Activated CD4-positive, alpha-beta memory T cell treated with anti-CD3 and anti-CD28 coated beads for 36 hours (primary cell): ENCODE measurements at regions of chr10 and their contacts with region 1.

Region 1: GRCh38 chr10:35912615-35913569 is 270.8 kb upstream of the FZD8 start:
- DNase-seq: no peak
- H3K4me3 Mint-ChIP-seq: no peak overlapping the region
- H3K27ac Mint-ChIP-seq: no peak overlapping the region
- H3K4me1 Mint-ChIP-seq: no peaks in the 10 kb centered on the region
- H3K27me3 Mint-ChIP-seq: no peaks in the 10 kb centered on the region

Region 2: GRCh38 chr10:35642027-35642792 is 270.7 kb before region 1 on chr10 and contains the start of gene FZD8:
- CTCF ChIA-PET with region 1: no interaction called
- POLR2A ChIA-PET with region 1: no interaction called
- intact Hi-C with region 1: loop called (anchors 5 kb)
- DNase-seq: peak; percentile 83
- H3K4me3 Mint-ChIP-seq: peak within 1 kb of the TSS; percentile 78
- H3K27ac Mint-ChIP-seq: no peak within 1 kb of the TSS
- H3K4me1 Mint-ChIP-seq: peaks cover 27% of the 10 kb centered on the region
- H3K27me3 Mint-ChIP-seq: peaks cover 34% of the 10 kb centered on the region
- total RNA-seq, gene FZD8: 0.31 to 0.45 TPM